Transverse colon (tissue), 4 donors: ENCODE measurements at regions of chr3 and their contacts with region 1.

Region 1: GRCh38 chr3:141105828-141106628 is 54.9 kb downstream of the SPSB4 start:
- DNase-seq: peak; percentile 68
- H3K4me3 ChIP-seq: no peak overlapping the region
- H3K27ac ChIP-seq: no peak overlapping the region
- H3K4me1 ChIP-seq: no peaks in the 10 kb centered on the region
- H3K27me3 ChIP-seq: no peaks in the 10 kb centered on the region
- CTCF ChIP-seq: peak; percentile 70 to 81 (median 72)
- EP300 ChIP-seq: no peak
- POLR2A ChIP-seq: no peak

Region 2: GRCh38 chr3:140898340-140899180 is 207.5 kb before region 1 on chr3:
- in situ Hi-C with region 1: loop called in 3 of 4 experiments (anchors 10 to 25 kb)
- intact Hi-C with region 1: loop called (anchors 5 kb)
- DNase-seq: no peak
- H3K4me3 ChIP-seq: no peak overlapping the region
- H3K27ac ChIP-seq: no peak overlapping the region
- H3K4me1 ChIP-seq: no peaks in the 10 kb centered on the region
- H3K27me3 ChIP-seq: no peaks in the 10 kb centered on the region
- CTCF ChIP-seq: peak; percentile 48 to 73 (median 53)
- EP300 ChIP-seq: no peak
- POLR2A ChIP-seq: no peak

Region 3: DNA sequence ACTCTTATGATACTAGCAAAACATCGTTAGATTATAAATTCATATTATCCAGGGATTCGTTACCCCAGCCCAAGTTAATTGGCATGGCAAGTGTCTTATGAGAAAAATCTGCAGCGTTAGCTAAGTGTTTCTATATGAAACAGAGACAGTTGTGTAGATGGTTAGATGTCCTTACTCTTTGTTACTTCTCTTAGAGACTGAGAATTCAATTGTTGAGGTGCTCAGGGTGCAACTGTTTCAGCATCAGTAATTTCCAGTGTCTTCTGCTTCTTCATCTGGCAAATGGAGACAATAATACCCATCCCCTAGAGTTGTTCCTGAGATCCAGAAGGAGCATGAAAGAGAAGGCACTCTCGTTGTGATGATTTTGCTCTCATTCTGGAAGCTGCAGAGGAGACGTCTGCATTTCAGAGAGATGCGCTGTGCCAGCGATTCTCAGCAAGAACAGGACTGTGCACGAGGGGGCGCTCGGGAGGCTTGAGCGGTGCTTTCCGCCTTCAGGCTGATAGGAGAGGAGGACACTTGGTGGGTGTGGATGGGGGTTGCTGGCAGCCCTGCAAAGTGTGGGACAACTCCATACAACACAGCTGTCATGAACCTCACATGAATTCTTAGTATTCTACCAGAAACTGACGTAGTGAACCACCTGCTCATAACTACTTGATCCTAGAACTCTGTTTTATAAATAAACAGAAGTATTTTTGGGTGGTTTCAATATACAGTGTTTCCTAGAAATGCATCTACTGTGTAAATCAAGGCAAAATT is 94.6 kb before region 1 on chr3:
- in situ Hi-C with region 1: loop called in 2 of 4 experiments (anchors 25 kb)
- intact Hi-C with region 1: loop called (anchors 1 kb)
- DNase-seq: peak; percentile 71
- H3K4me3 ChIP-seq: no peak overlapping the region
- H3K27ac ChIP-seq: no peak overlapping the region
- H3K4me1 ChIP-seq: no peaks in the 10 kb centered on the region
- H3K27me3 ChIP-seq: peaks cover 4% of the 10 kb centered on the region
- CTCF ChIP-seq: peak; percentile 50 to 71 (median 69)
- EP300 ChIP-seq: no peak
- POLR2A ChIP-seq: no peak

Region 4: GRCh38 chr3:141020143-141020830 is 85.7 kb before region 1 on chr3:
- in situ Hi-C with region 1: loop called in 3 of 4 experiments (anchors 10 to 25 kb)
- intact Hi-C with region 1: no loop called
- DNase-seq: no peak
- H3K4me3 ChIP-seq: no peak overlapping the region
- H3K27ac ChIP-seq: no peak overlapping the region
- H3K4me1 ChIP-seq: no peaks in the 10 kb centered on the region
- H3K27me3 ChIP-seq: no peaks in the 10 kb centered on the region
- CTCF ChIP-seq: no peak
- EP300 ChIP-seq: no peak
- POLR2A ChIP-seq: no peak